Heart right ventricle (tissue), 16 donors: ENCODE measurements at regions of chr21 and their contacts with region 1.

Region 1: DNA sequence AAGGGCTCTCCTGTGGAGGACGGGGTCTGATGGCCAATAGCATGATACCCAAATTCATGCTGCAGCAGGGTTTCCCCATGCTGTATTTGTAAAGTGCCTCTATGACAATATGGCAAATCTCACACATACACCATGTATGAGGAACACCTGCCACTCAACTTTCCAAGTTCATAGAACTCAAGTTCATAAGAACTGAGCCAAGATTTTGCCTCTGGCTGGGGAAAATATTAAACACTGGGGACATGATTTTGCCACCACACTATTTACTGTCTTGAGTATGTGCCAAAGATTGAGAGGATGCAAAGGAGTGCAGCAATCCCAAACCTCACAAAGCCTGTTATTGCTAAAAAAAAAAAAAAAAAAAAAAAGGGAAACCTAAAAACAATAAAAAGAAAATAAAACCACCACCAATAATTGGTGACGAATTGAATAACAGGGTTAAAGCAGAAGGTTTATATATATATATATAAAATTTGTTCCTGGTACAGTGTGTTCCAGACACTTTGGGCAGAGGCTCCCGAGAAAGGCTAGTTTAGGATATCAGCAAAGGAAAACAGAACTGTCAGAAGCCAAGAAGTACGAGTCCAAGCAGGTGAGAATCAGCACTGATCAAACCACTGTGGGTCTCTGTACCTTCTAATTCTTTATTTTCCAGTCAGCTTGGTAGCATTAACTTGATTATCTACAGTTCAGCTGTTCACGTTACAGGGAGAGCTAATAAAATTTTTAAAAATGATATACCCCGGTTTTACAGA is 24.3 kb downstream of the ZBTB21 start:
- DNase-seq: no peak
- ATAC-seq: no peak
- H3K4me3 ChIP-seq: no peak overlapping the region
- H3K27ac ChIP-seq: no peak overlapping the region
- H3K4me1 ChIP-seq: no peaks in the 10 kb centered on the region
- H3K27me3 ChIP-seq: no peaks in the 10 kb centered on the region
- CTCF ChIP-seq: no peak

Region 2: GRCh38 chr21:40194185-40194980 is 1791.5 kb before region 1 on chr21:
- intact Hi-C with region 1: no loop called
- DNase-seq: no peak
- ATAC-seq: no peak
- H3K4me3 ChIP-seq: no peak overlapping the region
- H3K27ac ChIP-seq: no peak overlapping the region
- H3K4me1 ChIP-seq: peaks cover 0 to 7% (median 0%) of the 10 kb centered on the region in 9 donors
- H3K27me3 ChIP-seq: peaks cover 0 to 4% (median 0%) of the 10 kb centered on the region in 7 donors
- CTCF ChIP-seq: no peak

Region 3: GRCh38 chr21:42711667-42712066 is 725.8 kb after region 1 on chr21:
- intact Hi-C with region 1: loop called in 1 of 10 experiments (anchors 5 kb)
- DNase-seq: no peak
- ATAC-seq: no peak
- H3K4me3 ChIP-seq: no peak overlapping the region
- H3K27ac ChIP-seq: no peak overlapping the region
- H3K4me1 ChIP-seq: no peaks in the 10 kb centered on the region
- H3K27me3 ChIP-seq: peaks cover 0 to 10% (median 0%) of the 10 kb centered on the region in 7 donors
- CTCF ChIP-seq: no peak